Activated T-helper 1 cell treated with anti-CD3 and anti-CD28 coated beads, Interleukin-12 subunit alpha, Interleukin-12 subunit beta, Interleukin-2, Interleukin-4 antibody, amounts not matched to agents 30 ng/mL and 10 ng/mL and 1 ng/mL, durations not matched to agents 14 hours and 24 hours and 36 hours (primary cell): ENCODE measurements at regions of chr4 and their contacts with region 1.

Region 1: DNA sequence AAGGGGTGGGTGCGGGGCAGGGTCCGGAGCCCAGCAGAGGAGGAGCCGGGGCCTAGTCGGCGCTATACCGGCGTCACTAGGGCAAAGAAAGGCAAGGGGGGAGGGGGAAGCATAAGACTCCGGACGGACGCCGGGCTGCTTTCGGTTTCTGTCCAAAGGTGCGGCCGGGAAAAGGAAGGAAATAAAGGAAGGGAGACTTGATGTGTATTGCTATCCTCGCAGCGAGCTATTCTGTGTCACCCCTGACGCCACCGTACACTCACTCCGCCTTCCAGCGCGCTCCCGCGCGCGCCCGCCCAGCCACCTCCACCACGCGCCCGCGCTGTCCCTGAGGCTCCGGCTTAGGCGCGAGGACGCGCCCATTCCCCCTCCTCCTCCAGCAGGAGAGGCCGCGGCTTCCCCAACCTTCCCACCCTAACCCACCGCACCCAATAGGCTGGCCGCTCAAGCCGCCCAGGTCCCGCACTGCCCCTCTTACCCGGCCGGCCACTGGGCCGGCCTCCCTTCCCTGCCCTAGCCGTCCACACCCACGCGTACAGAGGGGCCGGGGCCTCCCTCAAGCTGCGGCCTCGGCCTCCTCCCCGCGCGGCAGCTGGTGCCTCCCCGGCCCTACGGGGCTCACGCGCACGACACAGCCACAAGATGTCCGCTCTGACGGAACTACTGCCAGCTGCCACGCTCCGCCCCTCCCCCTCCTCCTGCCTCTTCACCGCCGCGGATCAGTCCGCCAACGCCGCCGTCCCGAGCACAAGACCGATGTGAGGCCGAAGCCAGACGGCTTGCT is at the start of gene UBE2D3:
- DNase-seq: peak; percentile 92
- H3K4me3 Mint-ChIP-seq: no peak within 1 kb of the TSS
- H3K27ac Mint-ChIP-seq: no peak within 1 kb of the TSS
- H3K4me1 Mint-ChIP-seq: peaks cover 38% of the 10 kb centered on the region
- H3K27me3 Mint-ChIP-seq: no peaks in the 10 kb centered on the region
- total RNA-seq, gene UBE2D3: 480 and 507 TPM in 2 replicates

Region 2: GRCh38 chr4:102390438-102390837 is 436.6 kb before region 1 on chr4:
- intact Hi-C with region 1: loop called (anchors 2 kb)
- DNase-seq: no peak
- H3K4me3 Mint-ChIP-seq: no peak overlapping the region
- H3K27ac Mint-ChIP-seq: peak overlapping the region; percentile 58
- H3K4me1 Mint-ChIP-seq: peaks cover 20% of the 10 kb centered on the region
- H3K27me3 Mint-ChIP-seq: peaks cover 7% of the 10 kb centered on the region

Region 3: GRCh38 chr4:102586644-102587021 is 240.4 kb before region 1 on chr4:
- intact Hi-C with region 1: loop called (anchors 5 kb)
- DNase-seq: peak; percentile 61
- H3K4me3 Mint-ChIP-seq: peak overlapping the region; percentile 47
- H3K27ac Mint-ChIP-seq: peak overlapping the region; percentile 60
- H3K4me1 Mint-ChIP-seq: peaks cover 86% of the 10 kb centered on the region
- H3K27me3 Mint-ChIP-seq: no peaks in the 10 kb centered on the region

Region 4: GRCh38 chr4:102620697-102621497 is 206.2 kb before region 1 on chr4:
- intact Hi-C with region 1: loop called (anchors 5 kb)
- DNase-seq: no peak
- H3K4me3 Mint-ChIP-seq: no peak overlapping the region
- H3K27ac Mint-ChIP-seq: no peak overlapping the region
- H3K4me1 Mint-ChIP-seq: peaks cover 63% of the 10 kb centered on the region
- H3K27me3 Mint-ChIP-seq: no peaks in the 10 kb centered on the region

Region 5: GRCh38 chr4:102815981-102816380 is 11.1 kb before region 1 on chr4:
- intact Hi-C with region 1: loop called (anchors 1 kb)
- DNase-seq: no peak
- H3K4me3 Mint-ChIP-seq: no peak overlapping the region
- H3K27ac Mint-ChIP-seq: peak overlapping the region; percentile 84
- H3K4me1 Mint-ChIP-seq: peaks cover 87% of the 10 kb centered on the region
- H3K27me3 Mint-ChIP-seq: no peaks in the 10 kb centered on the region

Region 6: GRCh38 chr4:102988429-102989020 is 161.4 kb after region 1 on chr4:
- intact Hi-C with region 1: no loop called
- DNase-seq: no peak
- H3K4me3 Mint-ChIP-seq: peak overlapping the region; percentile 66
- H3K27ac Mint-ChIP-seq: peak overlapping the region; percentile 62
- H3K4me1 Mint-ChIP-seq: peaks cover 29% of the 10 kb centered on the region
- H3K27me3 Mint-ChIP-seq: no peaks in the 10 kb centered on the region

Region 7: DNA sequence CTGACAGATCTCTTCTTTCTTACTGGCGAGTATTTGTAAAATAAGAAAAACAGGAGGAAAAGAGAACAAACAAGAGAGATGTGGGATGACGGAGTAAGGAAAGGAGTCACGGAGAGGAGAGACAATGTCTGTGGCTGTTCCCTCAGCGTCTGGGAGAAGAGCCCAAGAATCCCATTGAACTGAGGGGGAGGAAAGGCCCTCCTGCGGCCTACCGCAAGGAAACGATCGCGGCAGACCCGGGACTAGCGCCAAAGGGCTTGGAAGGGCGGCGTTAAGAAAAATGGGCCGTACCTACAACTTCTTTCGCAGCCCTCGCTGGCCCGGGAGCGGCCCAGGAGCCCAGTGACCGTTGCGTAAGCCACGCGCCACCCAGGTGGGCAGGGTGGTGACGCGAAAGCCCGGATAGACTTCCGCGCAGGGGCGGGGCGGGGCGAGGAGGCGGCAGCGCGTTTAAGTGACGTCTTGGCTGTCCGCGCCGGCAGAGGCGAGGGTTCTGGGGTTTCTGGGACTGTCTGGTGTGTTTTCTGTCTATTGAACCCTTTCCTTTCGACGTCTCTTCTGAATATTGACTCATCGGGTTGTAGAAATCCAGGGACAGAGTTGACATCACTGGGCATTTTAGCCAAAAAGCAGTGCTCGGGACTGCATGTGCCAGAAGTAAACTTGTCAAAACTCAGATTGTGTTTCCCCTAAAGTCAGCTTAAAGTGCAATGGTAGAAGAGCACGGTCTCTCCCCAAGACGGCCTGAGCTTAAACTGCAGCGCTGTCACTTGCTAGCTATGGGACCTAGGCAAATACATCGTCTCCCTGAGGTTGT is 192.4 kb after region 1 on chr4 and contains the start of gene SLC9B1:
- intact Hi-C with region 1: loop called (anchors 1 kb)
- DNase-seq: peak; percentile 93
- H3K4me3 Mint-ChIP-seq: peak within 1 kb of the TSS; percentile 90
- H3K27ac Mint-ChIP-seq: peak within 1 kb of the TSS; percentile 96
- H3K4me1 Mint-ChIP-seq: peaks cover 25% of the 10 kb centered on the region
- H3K27me3 Mint-ChIP-seq: no peaks in the 10 kb centered on the region
- total RNA-seq, gene SLC9B1: 0.51 and 0.52 TPM in 2 replicates

Region 8: DNA sequence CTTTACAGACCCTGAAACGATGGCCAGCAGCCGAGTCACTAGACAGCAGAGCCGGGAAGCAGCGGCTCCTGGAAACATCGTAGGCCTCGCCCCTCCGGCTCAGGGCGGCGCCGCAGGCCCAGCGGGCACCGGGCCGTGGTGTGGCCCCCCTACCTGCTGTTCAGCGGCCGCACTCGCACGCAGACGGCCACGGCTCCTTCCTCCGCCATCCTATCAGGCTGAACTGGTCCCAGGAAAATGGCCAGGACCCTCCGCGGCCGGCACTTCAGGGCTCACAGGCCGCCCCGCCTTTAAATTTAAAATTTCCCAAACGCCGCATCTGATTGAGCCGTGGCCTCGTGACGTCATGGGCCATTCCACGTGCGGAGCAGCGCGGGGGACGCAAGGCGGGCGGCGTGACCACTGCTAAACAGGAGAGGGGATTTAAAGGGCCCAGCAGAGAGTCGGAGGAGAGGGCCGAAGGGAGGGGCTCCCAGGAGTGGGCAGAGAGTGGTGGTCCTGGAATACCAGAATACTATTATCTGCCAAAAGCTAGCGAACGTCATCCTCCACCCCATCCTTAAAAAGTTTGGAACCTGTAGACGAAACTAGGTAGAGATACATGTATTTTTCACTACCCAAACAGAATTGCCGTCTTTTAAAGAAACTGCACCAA is 371.2 kb after region 1 on chr4 and contains the start of gene CENPE:
- intact Hi-C with region 1: loop called (anchors 1 kb)
- DNase-seq: peak; percentile 85
- H3K4me3 Mint-ChIP-seq: peak within 1 kb of the TSS; percentile 88
- H3K27ac Mint-ChIP-seq: peak within 1 kb of the TSS; percentile 99
- H3K4me1 Mint-ChIP-seq: peaks cover 23% of the 10 kb centered on the region
- H3K27me3 Mint-ChIP-seq: peaks cover 6% of the 10 kb centered on the region
- total RNA-seq, gene CENPE: 18.7 and 22.6 TPM in 2 replicates